Naive thymus-derived CD4-positive, alpha-beta T cell (primary cell): ENCODE measurements at regions of chr17 and their contacts with region 1.

Region 1: GRCh38 chr17:57995076-57995956 is 7.3 kb upstream of the VEZF1 start:
- DNase-seq: peak in 8 of 9 donors; percentile 27 to 66 (median 52)
- ATAC-seq: peak; percentile 91
- H3K4me3 ChIP-seq: no peak overlapping the region
- H3K4me3 Mint-ChIP-seq: peak overlapping the region in 4 of 10 donors; percentile 1 to 30 (median 12)
- H3K27ac ChIP-seq: peak overlapping the region; percentile 56
- H3K27ac Mint-ChIP-seq: peak overlapping the region; percentile 10 to 90 (median 70)
- H3K4me1 ChIP-seq: peaks cover 0 to 19% of the 10 kb centered on the region in 2 donors
- H3K4me1 Mint-ChIP-seq: peaks cover 16 to 61% (median 52%) of the 10 kb centered on the region in 7 donors
- H3K27me3 ChIP-seq: no peaks in the 10 kb centered on the region
- H3K27me3 Mint-ChIP-seq: no peaks in the 10 kb centered on the region

Region 2: GRCh38 chr17:57130761-57131461 is 864.4 kb before region 1 on chr17:
- CTCF ChIA-PET with region 1: no interaction called
- POLR2A ChIA-PET with region 1: no interaction called
- intact Hi-C with region 1: loop called in 1 of 2 experiments (anchors 2 kb)
- DNase-seq: peak; percentile 53 to 82 (median 75)
- ATAC-seq: peak; percentile 96
- H3K4me3 ChIP-seq: no peak overlapping the region
- H3K4me3 Mint-ChIP-seq: peak overlapping the region in 5 of 10 donors; percentile 14 to 53 (median 46)
- H3K27ac ChIP-seq: no peak overlapping the region
- H3K27ac Mint-ChIP-seq: no peak overlapping the region
- H3K4me1 ChIP-seq: peaks cover 0 to 6% of the 10 kb centered on the region in 2 donors
- H3K4me1 Mint-ChIP-seq: peaks cover 4 to 11% (median 8%) of the 10 kb centered on the region in 7 donors
- H3K27me3 ChIP-seq: no peaks in the 10 kb centered on the region
- H3K27me3 Mint-ChIP-seq: no peaks in the 10 kb centered on the region

Region 3: DNA sequence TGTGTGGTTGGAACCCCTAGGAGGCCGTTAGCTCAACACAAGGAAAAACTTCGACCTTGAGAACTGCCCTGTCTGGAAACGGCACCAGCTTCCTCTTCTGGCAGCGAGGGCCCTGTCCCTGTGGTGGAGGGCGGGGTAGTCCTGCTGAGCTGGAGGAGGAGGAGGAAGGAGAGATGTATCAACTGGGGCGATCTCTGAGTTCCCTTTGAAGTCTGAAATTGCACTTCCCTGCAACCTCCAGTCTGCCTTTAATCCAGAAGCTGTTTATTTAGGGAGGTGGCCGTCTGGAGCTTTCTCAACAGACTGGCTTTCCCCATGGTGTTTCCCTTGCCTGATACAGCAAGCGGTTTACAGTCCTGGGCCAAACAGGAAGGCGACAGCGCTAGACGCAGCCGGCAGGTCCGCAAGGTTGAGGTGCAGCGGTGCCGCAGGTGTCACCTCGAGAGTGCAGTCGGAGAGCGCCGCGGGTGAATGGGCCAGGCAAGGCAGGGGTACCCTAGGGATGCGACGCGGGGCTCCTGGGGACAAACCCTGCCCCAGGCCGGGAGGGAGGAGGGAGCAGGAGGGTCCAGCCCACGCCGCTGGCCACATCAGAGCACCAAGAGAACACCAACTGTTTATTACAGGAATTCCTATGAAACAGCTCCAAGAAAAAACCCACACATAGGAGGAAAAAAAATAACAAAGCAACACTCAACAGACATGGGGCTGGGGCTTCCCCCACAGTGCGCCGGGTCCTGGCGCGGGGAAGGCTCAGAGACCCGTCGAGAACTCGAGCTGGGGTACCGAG is 134.1 kb before region 1 on chr17:
- CTCF ChIA-PET with region 1: interaction called, 20 read pairs
- POLR2A ChIA-PET with region 1: interaction called, 6 read pairs
- intact Hi-C with region 1: loop called (anchors 1 kb)
- DNase-seq: peak in 5 of 9 donors; percentile 21 to 36 (median 27)
- ATAC-seq: peak; percentile 83
- H3K4me3 ChIP-seq: peak overlapping the region; percentile 60
- H3K4me3 Mint-ChIP-seq: peak overlapping the region; percentile 83 to 89 (median 86)
- H3K27ac ChIP-seq: no peak overlapping the region
- H3K27ac Mint-ChIP-seq: no peak overlapping the region
- H3K4me1 ChIP-seq: peaks cover 0 to 7% of the 10 kb centered on the region in 2 donors
- H3K4me1 Mint-ChIP-seq: peaks cover 9 to 16% (median 13%) of the 10 kb centered on the region in 7 donors
- H3K27me3 ChIP-seq: peaks cover 0 to 4% of the 10 kb centered on the region in 2 donors
- H3K27me3 Mint-ChIP-seq: peaks cover 0 to 45% (median 12%) of the 10 kb centered on the region in 5 donors

Region 4: DNA sequence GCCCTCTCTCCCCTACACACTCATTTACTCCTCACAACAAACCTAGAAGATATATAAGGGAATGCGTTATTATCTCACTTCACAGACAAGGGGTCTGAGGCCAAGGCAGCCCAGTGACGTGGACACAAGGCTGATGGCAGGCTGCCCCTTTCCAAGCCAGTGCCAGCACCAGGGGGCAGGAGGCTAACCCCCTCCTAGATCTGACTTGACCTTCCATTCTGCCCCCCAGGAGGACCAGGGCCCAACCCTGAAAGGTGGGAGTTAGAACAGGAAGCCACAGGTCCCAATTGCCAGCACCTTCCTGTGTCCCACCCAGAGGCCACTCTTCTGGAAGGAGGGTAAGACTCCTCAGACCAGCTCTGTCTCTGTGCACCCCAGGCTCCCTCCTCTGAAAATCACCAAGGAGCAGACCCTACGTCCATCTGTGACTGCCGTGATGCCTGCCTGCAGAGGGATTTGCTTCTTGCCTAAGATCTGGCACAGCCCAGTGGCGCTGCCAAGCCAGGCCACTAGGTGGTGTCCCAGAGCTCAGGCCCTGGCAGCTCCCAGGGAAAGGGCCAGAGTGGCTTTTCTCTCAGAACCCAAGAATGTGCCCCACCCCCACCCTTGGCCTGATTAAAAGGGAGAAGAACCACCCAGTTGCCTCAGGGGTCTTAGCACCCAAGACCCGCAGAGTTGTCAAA is 103.0 kb before region 1 on chr17:
- CTCF ChIA-PET with region 1: interaction called, 28 read pairs
- POLR2A ChIA-PET with region 1: no interaction called
- intact Hi-C with region 1: loop called (anchors 1 kb)
- DNase-seq: peak; percentile 44 to 81 (median 65)
- ATAC-seq: peak; percentile 87
- H3K4me3 ChIP-seq: no peak overlapping the region
- H3K4me3 Mint-ChIP-seq: no peak overlapping the region
- H3K27ac ChIP-seq: no peak overlapping the region
- H3K27ac Mint-ChIP-seq: no peak overlapping the region
- H3K4me1 ChIP-seq: no peaks in the 10 kb centered on the region
- H3K4me1 Mint-ChIP-seq: peaks cover 0 to 9% (median 4%) of the 10 kb centered on the region in 7 donors
- H3K27me3 ChIP-seq: no peaks in the 10 kb centered on the region
- H3K27me3 Mint-ChIP-seq: peaks cover 0 to 12% (median 0%) of the 10 kb centered on the region in 5 donors

Region 5: GRCh38 chr17:57916925-57917858 is 78.1 kb before region 1 on chr17:
- CTCF ChIA-PET with region 1: interaction called, 22 read pairs
- POLR2A ChIA-PET with region 1: interaction called, 3 read pairs
- intact Hi-C with region 1: loop called in 1 of 2 experiments (anchors 1 kb)
- DNase-seq: peak in 5 of 9 donors; percentile 8 to 45 (median 33)
- ATAC-seq: peak; percentile 68
- H3K4me3 ChIP-seq: no peak overlapping the region
- H3K4me3 Mint-ChIP-seq: no peak overlapping the region
- H3K27ac ChIP-seq: no peak overlapping the region
- H3K27ac Mint-ChIP-seq: peak overlapping the region in 1 of 9 donors; percentile 31
- H3K4me1 ChIP-seq: no peaks in the 10 kb centered on the region
- H3K4me1 Mint-ChIP-seq: peaks cover 0 to 3% (median 0%) of the 10 kb centered on the region in 7 donors
- H3K27me3 ChIP-seq: no peaks in the 10 kb centered on the region
- H3K27me3 Mint-ChIP-seq: peaks cover 0 to 25% (median 0%) of the 10 kb centered on the region in 5 donors

Region 6: DNA sequence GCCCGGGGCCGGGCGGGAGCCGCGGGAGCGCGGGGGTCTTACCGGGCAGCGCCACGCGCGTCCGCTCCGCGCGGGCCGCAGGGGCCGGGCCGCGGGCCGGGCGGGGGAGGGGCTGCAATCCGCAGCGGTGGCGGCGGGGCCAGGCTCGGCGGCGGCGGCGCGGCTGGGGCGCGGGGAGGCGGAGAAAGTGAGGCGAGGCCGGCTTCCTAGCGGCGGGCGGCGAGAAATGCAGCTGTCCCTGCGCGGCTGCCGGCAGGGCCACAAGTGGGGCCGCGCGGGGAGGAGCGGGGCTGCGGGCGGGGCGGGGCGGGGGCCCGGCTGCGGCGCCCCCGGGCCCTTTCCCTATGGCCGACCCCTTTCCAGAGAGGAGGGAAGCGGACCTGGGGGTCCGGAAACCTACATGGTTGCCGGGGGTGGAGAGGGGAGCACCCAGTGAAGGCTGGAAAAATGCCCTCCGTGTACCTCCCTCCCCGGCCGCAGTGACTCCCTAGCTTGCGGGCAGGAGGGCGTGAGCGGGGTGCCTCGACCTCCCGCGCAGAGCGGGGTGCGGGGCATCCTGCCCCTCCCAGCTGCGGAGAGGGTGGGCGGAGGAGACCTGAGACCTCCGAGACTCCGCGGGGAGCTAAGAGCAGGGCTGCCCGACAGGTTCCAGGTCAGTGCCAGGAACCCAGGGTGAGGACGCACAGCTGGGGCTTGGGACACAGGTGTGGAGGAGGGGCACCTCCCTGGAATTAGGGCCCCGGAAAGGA is 40.0 kb before region 1 on chr17 and contains the start of gene CUEDC1:
- CTCF ChIA-PET with region 1: interaction called, 3 read pairs
- POLR2A ChIA-PET with region 1: interaction called, 7 read pairs
- intact Hi-C with region 1: loop called in 1 of 2 experiments (anchors 5 kb)
- DNase-seq: peak; percentile 21 to 76 (median 51)
- ATAC-seq: peak; percentile 92
- H3K4me3 ChIP-seq: peak within 1 kb of the TSS; percentile 54
- H3K4me3 Mint-ChIP-seq: peak within 1 kb of the TSS; percentile 74 to 87 (median 81)
- H3K27ac ChIP-seq: no peak within 1 kb of the TSS
- H3K27ac Mint-ChIP-seq: peak within 1 kb of the TSS in 4 of 9 donors; percentile 24 to 67 (median 55)
- H3K4me1 ChIP-seq: peaks cover 14% of the 10 kb centered on the region in 2 donors
- H3K4me1 Mint-ChIP-seq: peaks cover 6 to 36% (median 30%) of the 10 kb centered on the region in 7 donors
- H3K27me3 ChIP-seq: no peaks in the 10 kb centered on the region
- H3K27me3 Mint-ChIP-seq: peaks cover 4 to 63% (median 9%) of the 10 kb centered on the region in 5 donors
- total RNA-seq, gene CUEDC1: 0.10 to 7.7 (median 1.0) TPM

Region 7: GRCh38 chr17:58028578-58028977 is 33.3 kb after region 1 on chr17:
- CTCF ChIA-PET with region 1: no interaction called
- POLR2A ChIA-PET with region 1: no interaction called
- intact Hi-C with region 1: no loop called
- DNase-seq: no peak
- ATAC-seq: no peak
- H3K4me3 ChIP-seq: no peak overlapping the region
- H3K4me3 Mint-ChIP-seq: no peak overlapping the region
- H3K27ac ChIP-seq: no peak overlapping the region
- H3K27ac Mint-ChIP-seq: no peak overlapping the region
- H3K4me1 ChIP-seq: no peaks in the 10 kb centered on the region
- H3K4me1 Mint-ChIP-seq: peaks cover 0 to 2% (median 0%) of the 10 kb centered on the region in 7 donors
- H3K27me3 ChIP-seq: no peaks in the 10 kb centered on the region
- H3K27me3 Mint-ChIP-seq: peaks cover 26 to 51% (median 44%) of the 10 kb centered on the region in 5 donors